AG04449 (cell line): ENCODE measurements at regions of chr3 and their contacts with region 1.

Region 1: GRCh38 chr3:184145111-184145524 is 10.0 kb downstream of the EIF2B5 start:
- DNase-seq: no peak
- H3K4me3 ChIP-seq: no peak overlapping the region
- CTCF ChIP-seq: peak; percentile 35

Region 2: DNA sequence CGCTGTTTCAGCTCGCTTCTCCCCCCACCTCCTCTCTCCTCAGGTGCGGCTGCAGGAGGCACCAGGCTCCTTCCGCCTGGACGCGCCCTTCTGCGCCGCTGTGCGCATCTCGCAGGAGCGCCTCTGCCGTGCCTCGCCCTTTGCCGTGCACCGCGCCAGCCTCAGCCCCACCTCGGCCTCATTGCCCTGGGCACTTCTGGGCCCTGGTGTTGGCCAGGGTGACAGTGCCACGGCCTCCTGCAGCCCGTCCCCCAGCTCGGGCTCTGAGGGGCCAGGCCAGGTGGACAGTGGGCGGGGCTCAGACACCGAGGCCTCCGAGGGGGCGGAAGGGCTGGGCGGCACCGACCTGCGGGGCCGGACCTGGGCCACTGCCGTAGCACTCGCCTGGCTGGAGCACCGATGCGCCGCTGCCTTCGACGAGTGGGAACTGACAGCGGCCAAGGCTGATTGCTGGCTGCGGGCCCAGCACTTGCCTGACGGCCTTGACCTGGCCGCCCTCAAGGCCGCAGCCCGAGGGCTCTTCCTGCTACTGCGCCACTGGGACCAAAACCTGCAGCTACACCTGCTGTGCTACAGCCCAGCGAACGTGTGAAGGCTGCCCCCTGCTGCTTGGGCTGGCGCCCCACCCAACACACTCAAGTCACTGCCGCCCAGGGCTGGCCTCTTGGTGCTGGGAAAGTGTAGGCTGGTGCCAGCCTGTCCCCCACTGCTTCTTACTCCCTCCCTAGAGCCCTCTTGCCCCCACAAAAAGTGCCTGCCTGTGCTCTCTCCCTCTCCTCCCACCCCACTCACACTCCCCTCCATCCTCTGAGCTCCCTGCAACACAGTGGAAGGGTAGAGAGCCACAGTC is 96.6 kb after region 1 on chr3:
- CTCF ChIA-PET with region 1: interaction called, 22 read pairs
- POLR2A ChIA-PET with region 1: no interaction called
- DNase-seq: no peak
- H3K4me3 ChIP-seq: no peak overlapping the region
- CTCF ChIP-seq: peak; percentile 56